ENCODE measurements at regions of chr6 and their contacts with region 1.

Region 1: DNA sequence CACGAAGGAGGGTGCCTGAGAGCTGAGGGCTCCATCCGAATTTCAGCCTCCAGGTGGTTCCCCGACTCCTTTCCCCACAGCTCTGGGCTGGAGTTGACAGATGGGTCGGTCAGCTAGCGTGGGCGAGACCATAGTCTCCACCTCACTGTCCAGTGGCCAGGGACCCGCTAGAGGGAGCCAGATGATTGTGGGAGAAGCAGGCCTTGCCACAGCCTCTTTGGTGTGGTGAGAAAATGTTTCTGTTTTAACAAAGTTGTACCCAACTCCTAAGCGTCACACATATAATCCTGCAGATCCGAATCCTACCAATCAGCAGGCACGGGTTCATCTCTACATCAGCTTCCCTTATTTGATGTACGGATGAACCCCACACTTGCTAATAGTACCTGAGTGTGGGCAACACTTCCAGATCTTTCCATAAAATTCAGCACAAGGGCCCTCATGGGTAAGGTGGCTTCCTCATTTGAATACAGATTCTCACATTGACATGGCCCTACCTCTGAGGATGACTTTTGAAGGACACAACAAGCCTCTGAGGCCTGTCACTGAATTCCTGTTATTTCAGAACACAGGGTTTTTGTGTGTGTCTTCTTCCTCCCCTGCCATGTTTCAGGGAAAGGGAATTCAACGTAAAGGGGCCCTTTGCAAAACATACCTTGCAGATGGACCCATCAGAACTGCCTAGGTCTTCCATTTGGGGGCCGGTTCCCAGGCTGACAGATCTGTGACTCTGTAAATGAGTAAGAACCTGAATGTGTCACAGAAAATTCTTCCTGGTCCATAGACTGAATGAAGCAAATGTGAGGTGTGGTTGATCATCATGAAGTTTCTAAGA is 103.2 kb upstream of the DUSP22 start:
- DNase-seq: peak; percentile 94
- H3K4me3 Mint-ChIP-seq: no peak overlapping the region
- H3K27ac Mint-ChIP-seq: peak overlapping the region; percentile 69
- H3K4me1 Mint-ChIP-seq: peaks cover 49% of the 10 kb centered on the region
- H3K27me3 Mint-ChIP-seq: peaks cover 1% of the 10 kb centered on the region

Region 2: GRCh38 chr6:217048-217659 is 28.1 kb after region 1 on chr6:
- CTCF ChIA-PET with region 1: interaction called, 72 read pairs
- intact Hi-C with region 1: loop called (anchors 1 kb)
- DNase-seq: peak; percentile 54
- H3K4me3 Mint-ChIP-seq: no peak overlapping the region
- H3K27ac Mint-ChIP-seq: no peak overlapping the region
- H3K4me1 Mint-ChIP-seq: peaks cover 53% of the 10 kb centered on the region
- H3K27me3 Mint-ChIP-seq: peaks cover 4% of the 10 kb centered on the region

Region 3: DNA sequence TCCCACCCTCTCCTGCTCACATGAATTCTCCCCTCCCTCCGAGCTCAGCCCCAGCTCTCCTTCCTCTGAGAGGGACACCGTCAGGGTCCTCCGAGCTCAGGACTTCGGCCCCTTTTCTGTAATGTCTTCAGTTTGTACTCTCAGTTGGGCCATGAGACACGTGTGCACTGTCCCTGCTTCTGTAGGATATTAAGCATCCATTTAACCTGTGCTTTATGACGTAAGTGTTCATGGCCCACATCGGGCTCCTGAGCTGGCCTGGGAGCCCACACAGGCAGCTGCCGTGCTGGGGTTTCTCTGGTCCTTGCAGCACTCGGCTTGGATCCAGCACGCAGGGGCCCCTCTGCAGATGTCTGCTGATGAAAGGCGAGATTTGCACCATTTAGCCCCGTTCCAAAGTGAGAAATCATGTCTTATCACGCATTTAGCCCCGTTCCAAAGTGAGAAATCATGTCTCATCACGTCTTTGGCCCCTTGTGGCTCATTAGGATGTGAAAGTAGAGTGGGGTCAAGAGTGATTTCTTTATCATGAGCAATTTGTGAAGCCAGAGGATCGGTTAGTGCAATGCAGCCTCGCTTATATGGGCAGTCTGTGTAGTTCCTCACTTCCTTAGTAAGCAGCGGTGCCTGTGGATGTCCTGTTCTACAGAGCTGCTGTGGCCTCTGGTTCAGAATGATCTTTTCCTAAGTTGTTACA is 128.6 kb after region 1 on chr6:
- CTCF ChIA-PET with region 1: interaction called, 6 read pairs
- intact Hi-C with region 1: loop called (anchors 1 kb)
- DNase-seq: no peak
- H3K4me3 Mint-ChIP-seq: no peak overlapping the region
- H3K27ac Mint-ChIP-seq: no peak overlapping the region
- H3K4me1 Mint-ChIP-seq: peaks cover 29% of the 10 kb centered on the region
- H3K27me3 Mint-ChIP-seq: no peaks in the 10 kb centered on the region

Region 4: DNA sequence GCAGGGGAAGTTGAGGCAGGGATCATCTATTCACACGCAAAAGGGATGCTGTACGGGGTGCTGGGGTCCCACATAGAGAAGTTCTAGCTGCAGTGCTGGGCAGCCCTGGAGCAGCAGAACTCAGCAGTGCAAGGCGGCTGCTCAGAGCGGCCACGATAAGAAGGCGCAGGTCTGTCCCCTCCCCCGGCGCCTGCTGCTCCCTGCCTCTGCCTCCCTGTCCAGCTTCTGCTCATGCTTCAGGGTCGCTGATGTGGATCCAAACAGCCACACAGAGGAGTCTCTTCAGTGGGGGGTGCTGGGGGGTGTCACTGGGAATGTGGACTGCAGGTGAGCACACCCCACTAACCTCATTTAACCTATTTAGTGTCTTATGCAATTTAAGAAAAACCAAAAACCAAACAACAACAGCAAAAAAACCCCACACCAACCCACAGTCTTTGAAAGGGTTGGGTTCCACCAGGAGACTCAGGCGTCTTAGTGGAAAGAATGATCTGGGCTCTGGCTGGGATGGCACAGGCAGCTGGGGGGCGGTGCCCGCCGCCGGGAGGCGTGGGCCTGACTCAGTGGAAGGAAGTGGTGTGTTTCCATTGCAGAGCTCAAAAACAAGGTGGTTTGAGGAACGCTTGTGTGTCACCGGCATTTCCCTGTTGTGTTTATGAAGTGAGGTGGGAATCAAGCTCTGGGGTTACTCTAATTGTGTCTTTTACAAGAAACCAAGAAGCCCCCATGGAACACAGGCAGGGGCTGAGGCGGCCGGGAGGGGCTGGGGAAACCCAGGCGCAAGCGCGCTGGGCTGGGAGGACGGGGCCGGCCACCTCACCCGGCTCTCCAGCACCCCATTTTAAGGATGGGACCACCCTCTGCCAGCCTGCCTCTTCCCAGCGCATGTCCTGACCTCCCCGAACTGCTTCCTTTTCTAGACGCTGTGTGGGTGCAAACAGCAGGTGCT is 257.7 kb after region 1 on chr6:
- CTCF ChIA-PET with region 1: no interaction called
- intact Hi-C with region 1: loop called (anchors 1 kb)
- DNase-seq: peak; percentile 96
- H3K4me3 Mint-ChIP-seq: peak overlapping the region; percentile 43
- H3K27ac Mint-ChIP-seq: peak overlapping the region; percentile 95
- H3K4me1 Mint-ChIP-seq: peaks cover 50% of the 10 kb centered on the region
- H3K27me3 Mint-ChIP-seq: no peaks in the 10 kb centered on the region

Region 5: DNA sequence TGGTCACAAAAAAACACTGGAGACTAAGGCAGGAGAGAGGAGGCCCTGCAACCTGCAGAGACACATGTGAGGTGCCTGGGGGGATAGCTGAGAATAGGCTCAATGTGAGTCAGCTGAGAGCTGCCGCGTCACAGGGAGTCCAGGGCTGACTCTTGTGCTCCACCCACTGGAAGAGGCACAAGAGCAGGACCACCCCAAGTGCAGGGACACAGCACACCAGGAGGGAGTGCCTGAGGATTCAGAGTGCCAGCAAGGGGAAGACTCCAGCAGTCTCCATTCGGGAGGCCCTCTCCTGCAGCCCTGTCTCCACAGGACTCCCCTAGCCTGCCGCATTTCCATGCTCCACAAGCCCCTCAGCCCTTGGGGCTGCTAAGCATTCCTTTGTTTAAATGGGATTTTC is 362.4 kb after region 1 on chr6:
- CTCF ChIA-PET with region 1: no interaction called
- intact Hi-C with region 1: loop called (anchors 1 kb)
- DNase-seq: peak; percentile 56
- H3K4me3 Mint-ChIP-seq: no peak overlapping the region
- H3K27ac Mint-ChIP-seq: peak overlapping the region; percentile 79
- H3K4me1 Mint-ChIP-seq: peaks cover 57% of the 10 kb centered on the region
- H3K27me3 Mint-ChIP-seq: no peaks in the 10 kb centered on the region

Region 6: GRCh38 chr6:650098-650497 is 461.1 kb after region 1 on chr6:
- CTCF ChIA-PET with region 1: no interaction called
- intact Hi-C with region 1: no loop called
- DNase-seq: no peak
- H3K4me3 Mint-ChIP-seq: no peak overlapping the region
- H3K27ac Mint-ChIP-seq: no peak overlapping the region
- H3K4me1 Mint-ChIP-seq: peaks cover 27% of the 10 kb centered on the region
- H3K27me3 Mint-ChIP-seq: no peaks in the 10 kb centered on the region

Region 7: GRCh38 chr6:710601-711571 is 521.8 kb after region 1 on chr6:
- CTCF ChIA-PET with region 1: interaction called, 3 read pairs
- intact Hi-C with region 1: loop called (anchors 5 kb)
- DNase-seq: peak; percentile 64
- H3K4me3 Mint-ChIP-seq: peak overlapping the region; percentile 89
- H3K27ac Mint-ChIP-seq: peak overlapping the region; percentile 92
- H3K4me1 Mint-ChIP-seq: peaks cover 21% of the 10 kb centered on the region
- H3K27me3 Mint-ChIP-seq: peaks cover 4% of the 10 kb centered on the region

Measured in activated naive CD4-positive, alpha-beta T cell treated with anti-CD3 and anti-CD28 coated beads for 36 hours (primary cell).